ENCODE measurements at regions of chr10 and their contacts with region 1.

Region 1: DNA sequence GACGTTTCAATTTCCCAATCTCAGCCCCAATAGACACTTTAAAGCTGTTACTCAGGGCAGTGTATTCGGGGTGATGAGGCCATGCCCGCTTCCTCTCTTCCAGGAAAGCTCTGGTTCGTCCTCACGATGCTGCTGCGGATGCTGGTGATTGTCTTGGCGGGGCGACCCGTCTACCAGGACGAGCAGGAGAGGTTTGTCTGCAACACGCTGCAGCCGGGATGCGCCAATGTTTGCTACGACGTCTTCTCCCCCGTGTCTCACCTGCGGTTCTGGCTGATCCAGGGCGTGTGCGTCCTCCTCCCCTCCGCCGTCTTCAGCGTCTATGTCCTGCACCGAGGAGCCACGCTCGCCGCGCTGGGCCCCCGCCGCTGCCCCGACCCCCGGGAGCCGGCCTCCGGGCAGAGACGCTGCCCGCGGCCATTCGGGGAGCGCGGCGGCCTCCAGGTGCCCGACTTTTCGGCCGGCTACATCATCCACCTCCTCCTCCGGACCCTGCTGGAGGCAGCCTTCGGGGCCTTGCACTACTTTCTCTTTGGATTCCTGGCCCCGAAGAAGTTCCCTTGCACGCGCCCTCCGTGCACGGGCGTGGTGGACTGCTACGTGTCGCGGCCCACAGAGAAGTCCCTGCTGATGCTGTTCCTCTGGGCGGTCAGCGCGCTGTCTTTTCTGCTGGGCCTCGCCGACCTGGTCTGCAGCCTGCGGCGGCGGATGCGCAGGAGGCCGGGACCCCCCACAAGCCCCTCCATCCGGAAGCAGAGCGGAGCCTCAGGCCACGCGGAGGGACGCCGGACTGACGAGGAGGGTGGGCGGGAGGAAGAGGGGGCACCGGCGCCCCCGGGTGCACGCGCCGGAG is 2.6 kb downstream of the GJD4 start:
- DNase-seq: no peak
- ATAC-seq: peak in 4 of 8 donors; percentile 26 to 52 (median 30)
- H3K4me3 ChIP-seq: peak overlapping the region; percentile 40 to 73 (median 53)
- H3K27ac ChIP-seq: no peak overlapping the region
- H3K4me1 ChIP-seq: peaks cover 0 to 11% (median 10%) of the 10 kb centered on the region in 9 donors
- H3K27me3 ChIP-seq: peaks cover 0 to 66% (median 36%) of the 10 kb centered on the region in 7 donors
- CTCF ChIP-seq: no peak

Region 2: GRCh38 chr10:35246770-35247343 is 360.8 kb before region 1 on chr10:
- intact Hi-C with region 1: loop called in 1 of 10 experiments (anchors 10 kb)
- DNase-seq: no peak
- ATAC-seq: no peak
- H3K4me3 ChIP-seq: no peak overlapping the region
- H3K27ac ChIP-seq: no peak overlapping the region
- H3K4me1 ChIP-seq: no peaks in the 10 kb centered on the region
- H3K27me3 ChIP-seq: no peaks in the 10 kb centered on the region
- CTCF ChIP-seq: no peak

Region 3: GRCh38 chr10:35565602-35566081 is 42.1 kb before region 1 on chr10:
- intact Hi-C with region 1: no loop called
- DNase-seq: peak; percentile 32
- ATAC-seq: peak; percentile 37 to 78 (median 69)
- H3K4me3 ChIP-seq: no peak overlapping the region
- H3K27ac ChIP-seq: peak overlapping the region in 8 of 10 donors; percentile 49 to 79 (median 64)
- H3K4me1 ChIP-seq: peaks cover 17 to 71% (median 54%) of the 10 kb centered on the region in 9 donors
- H3K27me3 ChIP-seq: no peaks in the 10 kb centered on the region
- CTCF ChIP-seq: peak in 1 of 9 donors; percentile 19

Measured in heart right ventricle (tissue), 16 donors.